ENCODE measurements at regions of chr14 and their contacts with region 1.

Region 1: GRCh38 chr14:88013750-88014349 is 8.9 kb downstream of the GPR65 start:
- DNase-seq: peak in 4 of 5 donors; percentile 63 to 69 (median 66)
- ATAC-seq: peak; percentile 92 to 95 (median 95)
- H3K4me3 ChIP-seq: peak overlapping the region in 1 of 12 donors; percentile 12
- H3K27ac ChIP-seq: peak overlapping the region in 1 of 12 donors; percentile 59
- H3K4me1 ChIP-seq: peaks cover 0 to 63% (median 0%) of the 10 kb centered on the region in 12 donors
- H3K27me3 ChIP-seq: no peaks in the 10 kb centered on the region
- CTCF ChIP-seq: peak; percentile 76 to 96 (median 90)
- POLR2A ChIP-seq: no peak

Region 2: DNA sequence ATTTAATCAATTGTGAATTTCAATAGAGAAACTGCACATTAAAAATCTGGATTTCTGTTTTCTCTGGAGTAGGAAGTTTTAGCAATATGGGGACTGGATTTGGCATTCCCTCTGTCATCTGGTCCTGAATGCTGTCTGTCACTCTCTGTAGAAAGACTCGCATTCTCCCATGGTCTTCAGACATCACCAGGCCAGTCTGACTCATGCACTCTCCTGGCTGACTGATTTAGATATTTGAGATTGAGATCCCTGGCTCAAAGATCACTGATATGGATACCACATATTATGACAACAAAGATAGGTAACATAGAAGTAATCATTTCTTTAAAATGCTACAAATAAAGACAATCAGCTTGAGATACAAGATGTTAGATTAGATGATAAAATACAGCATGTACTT is 545.3 kb before region 1 on chr14:
- intact Hi-C with region 1: no loop called
- DNase-seq: no peak
- ATAC-seq: no peak
- H3K4me3 ChIP-seq: no peak overlapping the region
- H3K27ac ChIP-seq: no peak overlapping the region
- H3K4me1 ChIP-seq: no peaks in the 10 kb centered on the region
- H3K27me3 ChIP-seq: no peaks in the 10 kb centered on the region
- CTCF ChIP-seq: no peak
- POLR2A ChIP-seq: no peak

Region 3: GRCh38 chr14:87944987-87945604 is 68.8 kb before region 1 on chr14:
- intact Hi-C with region 1: loop called in 1 of 10 experiments (anchors 5 kb)
- DNase-seq: no peak
- ATAC-seq: no peak
- H3K4me3 ChIP-seq: no peak overlapping the region
- H3K27ac ChIP-seq: no peak overlapping the region
- H3K4me1 ChIP-seq: no peaks in the 10 kb centered on the region
- H3K27me3 ChIP-seq: no peaks in the 10 kb centered on the region
- CTCF ChIP-seq: peak; percentile 58 to 76 (median 66)
- POLR2A ChIP-seq: no peak

Region 4: GRCh38 chr14:88168498-88169165 is 154.8 kb after region 1 on chr14:
- intact Hi-C with region 1: loop called (anchors 2 to 5 kb)
- DNase-seq: peak in 1 of 5 donors; percentile 20
- ATAC-seq: peak; percentile 67 to 88 (median 76)
- H3K4me3 ChIP-seq: no peak overlapping the region
- H3K27ac ChIP-seq: no peak overlapping the region
- H3K4me1 ChIP-seq: no peaks in the 10 kb centered on the region
- H3K27me3 ChIP-seq: peaks cover 0 to 7% (median 0%) of the 10 kb centered on the region in 9 donors
- CTCF ChIP-seq: peak; percentile 44 to 69 (median 61)
- POLR2A ChIP-seq: no peak

Region 5: GRCh38 chr14:88380405-88380804 is 366.6 kb after region 1 on chr14:
- intact Hi-C with region 1: loop called in 5 of 10 experiments (anchors 5 to 10 kb)
- DNase-seq: no peak
- ATAC-seq: no peak
- H3K4me3 ChIP-seq: no peak overlapping the region
- H3K27ac ChIP-seq: no peak overlapping the region
- H3K4me1 ChIP-seq: peaks cover 0 to 9% (median 5%) of the 10 kb centered on the region in 12 donors
- H3K27me3 ChIP-seq: peaks cover 0 to 4% (median 0%) of the 10 kb centered on the region in 9 donors
- CTCF ChIP-seq: peak in 7 of 12 donors; percentile 10 to 42 (median 25)
- POLR2A ChIP-seq: no peak